ENCODE measurements at regions of chr11 and their contacts with region 1.

Region 1: DNA sequence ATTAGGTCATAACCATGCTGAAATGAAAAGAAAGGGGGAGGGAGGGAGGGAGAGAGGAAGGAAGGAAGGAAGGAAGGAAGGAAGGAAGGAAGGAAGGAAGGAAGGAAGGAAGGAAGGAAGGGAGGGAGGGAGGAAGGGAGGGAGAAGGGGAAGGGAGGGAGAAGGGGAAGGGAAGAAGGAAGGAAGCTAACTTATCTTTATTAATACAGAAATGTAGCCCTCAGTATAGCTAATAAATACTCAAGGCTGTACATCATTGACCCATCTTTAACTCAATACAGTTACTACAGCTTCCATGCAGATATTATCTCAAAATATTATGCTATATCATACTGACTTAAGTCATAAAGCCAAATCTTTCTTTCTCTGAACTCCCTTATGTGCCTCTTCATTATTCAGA is 17.4 kb upstream of the SOX6 start:
- DNase-seq: no peak
- ATAC-seq: no peak
- H3K4me3 ChIP-seq: no peak overlapping the region
- H3K27ac ChIP-seq: no peak overlapping the region
- H3K4me1 ChIP-seq: peaks cover 0 to 14% (median 0%) of the 10 kb centered on the region in 9 donors
- H3K27me3 ChIP-seq: no peaks in the 10 kb centered on the region
- CTCF ChIP-seq: no peak

Region 2: GRCh38 chr11:16293204-16293681 is 80.5 kb before region 1 on chr11:
- intact Hi-C with region 1: loop called in 1 of 10 experiments (anchors 1 kb)
- DNase-seq: no peak
- ATAC-seq: peak; percentile 81 to 95 (median 88)
- H3K4me3 ChIP-seq: no peak overlapping the region
- H3K27ac ChIP-seq: peak overlapping the region; percentile 13 to 85 (median 75)
- H3K4me1 ChIP-seq: peaks cover 0 to 44% (median 29%) of the 10 kb centered on the region in 9 donors
- H3K27me3 ChIP-seq: no peaks in the 10 kb centered on the region
- CTCF ChIP-seq: no peak

Measured in heart right ventricle (tissue), 16 donors.